Activated CD8-positive, alpha-beta T cell treated with anti-CD3 and anti-CD28 coated beads for 36 hours (primary cell): ENCODE measurements at regions of chr5 and their contacts with region 1.

Region 1: DNA sequence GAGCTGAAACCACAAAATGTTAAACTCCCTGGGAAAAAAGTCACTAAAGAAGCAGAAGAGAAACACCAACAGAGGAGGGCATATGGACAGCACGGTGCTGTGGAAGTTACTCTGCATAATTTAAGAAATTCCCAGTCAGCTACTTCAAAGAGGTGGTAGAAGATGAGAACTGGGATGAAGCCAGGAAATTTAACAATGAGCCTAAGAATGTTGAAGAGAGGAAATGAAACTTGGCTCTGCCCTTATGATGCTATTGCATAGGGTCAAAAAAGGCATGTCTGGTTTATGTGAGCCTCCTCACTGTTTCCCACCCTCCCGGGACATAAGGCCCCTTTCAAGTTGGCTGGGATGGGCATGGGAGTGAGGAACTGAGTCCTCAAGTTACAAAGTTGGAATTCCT is 25.4 kb upstream of the SNX18 start:
- DNase-seq: no peak
- ATAC-seq: no peak
- H3K4me3 Mint-ChIP-seq: no peak overlapping the region
- H3K27ac Mint-ChIP-seq: no peak overlapping the region
- H3K4me1 Mint-ChIP-seq: no peaks in the 10 kb centered on the region
- H3K27me3 Mint-ChIP-seq: peaks cover 2% of the 10 kb centered on the region
- CTCF ChIP-seq: no peak

Region 2: DNA sequence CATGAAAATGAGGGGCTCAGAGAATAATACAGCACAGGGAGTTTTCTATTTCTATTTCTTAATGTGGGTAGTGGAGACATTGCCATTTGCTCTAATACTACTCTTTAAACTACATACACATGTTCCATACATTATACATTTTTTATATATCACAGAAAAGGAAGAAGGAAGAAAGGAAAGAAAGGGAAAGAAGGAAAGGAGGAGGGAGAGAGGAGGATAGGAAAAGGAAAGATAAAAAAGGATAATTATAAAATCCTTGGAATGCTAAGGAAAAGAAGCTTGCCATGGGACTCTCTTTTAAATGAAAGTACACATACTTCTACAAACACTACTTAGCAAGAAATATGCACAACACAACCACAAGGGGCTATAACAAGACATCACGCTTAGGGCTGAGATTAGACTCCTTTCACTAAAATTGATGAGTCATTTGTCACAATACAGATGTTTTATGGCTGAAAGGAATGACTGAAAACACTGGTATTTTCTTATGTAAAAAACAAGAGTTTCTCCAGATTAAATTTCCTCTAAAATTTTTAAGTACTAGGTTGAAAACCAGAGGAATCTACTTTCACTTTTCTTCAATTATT is 401.6 kb before region 1 on chr5:
- CTCF ChIA-PET with region 1: no interaction called
- POLR2A ChIA-PET with region 1: no interaction called
- intact Hi-C with region 1: no loop called
- DNase-seq: no peak
- ATAC-seq: peak; percentile 55
- H3K4me3 Mint-ChIP-seq: no peak overlapping the region
- H3K27ac Mint-ChIP-seq: no peak overlapping the region
- H3K4me1 Mint-ChIP-seq: no peaks in the 10 kb centered on the region
- H3K27me3 Mint-ChIP-seq: no peaks in the 10 kb centered on the region
- CTCF ChIP-seq: no peak

Region 3: DNA sequence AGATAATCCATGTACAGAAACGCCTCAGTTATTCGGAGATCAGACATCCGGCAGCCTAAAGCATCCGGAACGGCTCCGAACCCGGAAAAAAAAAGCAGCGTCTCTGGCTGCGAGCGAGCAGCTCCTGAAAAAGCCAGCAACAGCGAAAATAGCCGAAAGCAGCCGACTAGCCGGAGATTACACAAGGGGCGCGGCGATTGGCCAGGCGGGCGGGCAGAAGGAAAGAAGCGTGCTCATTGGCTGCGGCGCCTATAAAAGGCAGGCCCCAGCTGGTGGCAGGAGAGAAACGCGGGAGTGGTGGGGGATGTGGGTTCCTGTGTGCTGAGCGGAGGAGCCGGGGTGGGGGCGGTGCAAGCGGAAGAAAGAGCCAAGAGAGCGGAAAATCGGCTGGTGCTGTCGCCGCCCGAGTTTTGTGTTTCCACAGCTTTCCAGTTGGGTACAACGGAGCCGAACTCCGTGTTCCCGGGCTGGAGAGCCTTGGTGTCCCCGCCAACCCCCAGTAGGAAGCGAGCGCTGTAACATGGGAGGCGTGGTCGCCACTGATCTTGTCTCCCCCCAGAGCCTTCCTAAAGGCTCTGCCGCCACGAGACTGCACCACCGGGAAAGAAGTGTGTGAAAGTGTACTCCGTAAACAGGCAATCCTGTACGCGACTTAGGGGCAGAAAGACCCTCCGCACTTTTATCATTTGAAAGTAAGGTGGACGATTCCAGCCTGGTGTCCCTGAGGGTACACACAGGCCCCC is 181.6 kb before region 1 on chr5 and contains the start of gene ARL15:
- CTCF ChIA-PET with region 1: interaction called, 15 read pairs
- POLR2A ChIA-PET with region 1: interaction called, 3 read pairs
- intact Hi-C with region 1: no loop called
- DNase-seq: peak; percentile 98
- ATAC-seq: peak; percentile 95
- H3K4me3 Mint-ChIP-seq: peak within 1 kb of the TSS; percentile 78
- H3K27ac Mint-ChIP-seq: peak within 1 kb of the TSS; percentile 85
- H3K4me1 Mint-ChIP-seq: peaks cover 26% of the 10 kb centered on the region
- H3K27me3 Mint-ChIP-seq: peaks cover 5% of the 10 kb centered on the region
- CTCF ChIP-seq: no peak
- total RNA-seq, gene ARL15: 5.7 to 6.3 TPM

Region 4: DNA sequence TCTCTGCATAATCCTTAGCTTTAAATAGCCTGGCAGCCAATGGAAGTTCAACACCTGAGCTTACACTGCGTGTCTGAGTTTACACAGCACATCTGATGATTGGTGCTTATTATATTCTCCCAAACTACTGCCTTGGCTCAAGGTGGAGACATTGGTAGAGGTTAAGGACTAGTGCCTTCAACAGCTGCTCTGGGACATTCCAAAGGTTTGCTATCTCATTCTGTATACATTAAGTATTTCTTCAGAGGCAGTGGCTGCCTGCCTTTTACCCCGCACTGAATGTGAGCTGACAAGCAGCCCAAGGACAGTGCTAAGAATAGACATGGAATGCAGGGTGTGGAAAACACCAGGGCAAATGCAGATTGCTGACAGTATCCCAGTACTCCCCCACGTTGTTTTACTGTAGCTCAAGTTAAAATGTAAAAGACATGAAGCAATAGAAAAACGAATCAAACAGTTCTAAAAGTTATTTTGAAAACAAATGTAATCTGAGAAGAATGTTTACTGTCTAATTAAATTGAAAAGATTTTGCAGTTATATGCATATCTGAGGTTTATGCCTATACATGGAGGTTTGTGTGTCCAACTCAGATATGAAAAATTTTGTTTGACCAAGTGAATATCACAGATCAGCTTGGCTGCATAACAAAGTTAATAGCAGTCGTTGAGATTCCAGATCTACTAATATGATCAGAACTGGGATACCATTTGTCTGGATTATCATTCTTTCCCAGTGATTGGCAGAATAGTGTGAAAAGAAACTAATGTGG is 34.9 kb before region 1 on chr5:
- CTCF ChIA-PET with region 1: interaction called, 33 read pairs
- POLR2A ChIA-PET with region 1: no interaction called
- intact Hi-C with region 1: no loop called
- DNase-seq: no peak
- ATAC-seq: no peak
- H3K4me3 Mint-ChIP-seq: no peak overlapping the region
- H3K27ac Mint-ChIP-seq: no peak overlapping the region
- H3K4me1 Mint-ChIP-seq: no peaks in the 10 kb centered on the region
- H3K27me3 Mint-ChIP-seq: peaks cover 13% of the 10 kb centered on the region
- CTCF ChIP-seq: no peak

Region 5: GRCh38 chr5:54477941-54478478 is 14.2 kb before region 1 on chr5:
- CTCF ChIA-PET with region 1: interaction called, 14 read pairs
- POLR2A ChIA-PET with region 1: no interaction called
- intact Hi-C with region 1: no loop called
- DNase-seq: no peak
- ATAC-seq: no peak
- H3K4me3 Mint-ChIP-seq: no peak overlapping the region
- H3K27ac Mint-ChIP-seq: no peak overlapping the region
- H3K4me1 Mint-ChIP-seq: no peaks in the 10 kb centered on the region
- H3K27me3 Mint-ChIP-seq: peaks cover 14% of the 10 kb centered on the region
- CTCF ChIP-seq: no peak